WTC11 (cell line): ENCODE measurements at regions of chr17 and their contacts with region 1.

Region 1: DNA sequence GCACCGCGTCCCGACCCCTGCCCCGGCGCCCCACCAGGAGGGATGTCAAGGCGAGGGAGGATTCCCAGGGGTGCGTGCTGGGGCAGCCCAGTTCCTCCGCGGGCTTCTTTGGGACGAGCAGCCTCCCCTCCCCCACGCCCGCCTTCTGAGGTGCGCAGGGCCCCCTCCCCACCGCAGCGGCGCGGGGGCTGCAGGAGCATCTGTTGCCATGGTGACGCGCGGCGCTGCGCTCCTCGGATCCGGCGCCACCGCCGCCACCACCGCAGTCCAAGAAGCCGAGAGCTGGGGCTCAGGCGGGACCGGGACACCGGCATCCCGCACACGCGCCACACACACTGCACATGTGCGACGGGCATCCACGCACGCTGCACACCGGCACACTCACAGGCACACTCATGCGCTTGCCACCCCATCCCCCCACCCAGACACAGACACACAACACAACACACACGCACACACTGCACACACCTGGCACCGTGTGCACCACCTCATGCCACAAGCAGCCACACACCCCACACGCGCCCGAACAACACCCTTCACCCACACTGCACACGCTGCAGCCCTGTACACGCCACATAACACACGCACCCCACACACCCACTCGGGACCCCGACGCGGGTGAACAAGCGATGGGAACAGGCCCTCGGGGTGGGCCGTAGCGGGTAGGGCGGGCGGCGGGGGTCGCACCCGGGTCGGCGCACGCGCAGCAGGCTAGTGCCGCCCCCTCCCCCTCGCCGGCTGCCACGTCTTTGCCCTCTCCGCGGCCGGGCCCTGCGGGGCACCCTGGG is 17.0 kb downstream of the ENPP7 start:
- DNase-seq: peak; percentile 61
- ATAC-seq: peak; percentile 21; the same call in 1 of the 2 replicates
- H3K4me3 Mint-ChIP-seq: peak overlapping the region; percentile 75
- H3K27ac Mint-ChIP-seq: no peak overlapping the region
- H3K4me1 Mint-ChIP-seq: peaks cover 15% of the 10 kb centered on the region
- H3K27me3 Mint-ChIP-seq: peaks cover 81% of the 10 kb centered on the region
- CTCF ChIP-seq: no peak

Region 2: GRCh38 chr17:79721993-79722671 is 25.6 kb before region 1 on chr17:
- CTCF ChIA-PET with region 1: interaction called, 65 read pairs
- POLR2A ChIA-PET with region 1: no interaction called
- DNase-seq: peak; percentile 31
- ATAC-seq: peak; percentile 96
- H3K4me3 Mint-ChIP-seq: no peak overlapping the region
- H3K27ac Mint-ChIP-seq: no peak overlapping the region
- H3K4me1 Mint-ChIP-seq: peaks cover 8% of the 10 kb centered on the region; the same call in 1 of the 2 replicates
- H3K27me3 Mint-ChIP-seq: peaks cover 4% of the 10 kb centered on the region; the same call in 1 of the 2 replicates
- CTCF ChIP-seq: peak; percentile 27; the same call in 1 of the 2 replicates

Region 3: DNA sequence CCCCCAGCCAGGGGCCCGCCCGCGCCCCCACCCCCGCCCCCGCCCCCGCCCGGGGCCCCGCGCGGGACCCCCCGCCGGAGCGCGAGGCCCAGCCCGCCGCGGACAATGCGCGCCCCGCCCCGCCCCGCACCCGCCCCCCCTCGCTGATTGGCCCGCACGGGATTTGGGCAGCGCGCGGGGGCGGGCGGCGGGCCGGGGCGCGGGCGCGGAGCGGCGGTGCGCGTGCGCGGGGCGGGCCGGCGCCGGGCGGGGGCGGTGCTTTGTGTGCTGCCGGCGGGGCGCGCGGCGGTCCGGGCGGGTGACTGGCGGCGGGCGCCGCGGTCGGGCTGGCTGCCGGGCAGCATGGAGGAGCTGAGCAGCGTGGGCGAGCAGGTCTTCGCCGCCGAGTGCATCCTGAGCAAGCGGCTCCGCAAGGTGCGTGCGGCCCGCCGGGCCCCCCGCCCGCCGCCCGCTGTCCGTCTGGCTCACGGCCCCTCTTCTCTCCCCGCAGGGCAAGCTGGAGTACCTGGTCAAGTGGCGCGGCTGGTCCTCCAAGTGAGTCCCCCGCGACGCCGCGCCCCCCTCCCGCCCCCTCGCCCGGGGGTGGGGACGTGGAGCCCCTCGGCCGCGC is 30.3 kb after region 1 on chr17 and contains the start of gene CBX2:
- CTCF ChIA-PET with region 1: interaction called, 83 read pairs
- POLR2A ChIA-PET with region 1: no interaction called
- DNase-seq: peak; percentile 75
- ATAC-seq: peak; percentile 55
- H3K4me3 Mint-ChIP-seq: peak within 1 kb of the TSS; percentile 91
- H3K27ac Mint-ChIP-seq: peak within 1 kb of the TSS; percentile 93
- H3K4me1 Mint-ChIP-seq: peaks cover 54% of the 10 kb centered on the region
- H3K27me3 Mint-ChIP-seq: peaks cover 15% of the 10 kb centered on the region
- CTCF ChIP-seq: no peak
- total RNA-seq, gene CBX2: 78.1 to 85.5 TPM (median 78.7 TPM) in 3 replicates

Region 4: GRCh38 chr17:79796763-79797491 is 49.2 kb after region 1 on chr17 and contains the start of gene CBX8:
- CTCF ChIA-PET with region 1: interaction called, 30 read pairs
- POLR2A ChIA-PET with region 1: interaction called, 9 read pairs
- DNase-seq: peak; percentile 100
- ATAC-seq: peak; percentile 71
- H3K4me3 Mint-ChIP-seq: peak within 1 kb of the TSS; percentile 68
- H3K27ac Mint-ChIP-seq: no peak within 1 kb of the TSS
- H3K4me1 Mint-ChIP-seq: peaks cover 47% of the 10 kb centered on the region
- H3K27me3 Mint-ChIP-seq: peaks cover 94% of the 10 kb centered on the region
- CTCF ChIP-seq: no peak
- total RNA-seq, gene CBX8: 1.8 to 2.1 TPM (median 2.0 TPM) in 3 replicates

Region 5: DNA sequence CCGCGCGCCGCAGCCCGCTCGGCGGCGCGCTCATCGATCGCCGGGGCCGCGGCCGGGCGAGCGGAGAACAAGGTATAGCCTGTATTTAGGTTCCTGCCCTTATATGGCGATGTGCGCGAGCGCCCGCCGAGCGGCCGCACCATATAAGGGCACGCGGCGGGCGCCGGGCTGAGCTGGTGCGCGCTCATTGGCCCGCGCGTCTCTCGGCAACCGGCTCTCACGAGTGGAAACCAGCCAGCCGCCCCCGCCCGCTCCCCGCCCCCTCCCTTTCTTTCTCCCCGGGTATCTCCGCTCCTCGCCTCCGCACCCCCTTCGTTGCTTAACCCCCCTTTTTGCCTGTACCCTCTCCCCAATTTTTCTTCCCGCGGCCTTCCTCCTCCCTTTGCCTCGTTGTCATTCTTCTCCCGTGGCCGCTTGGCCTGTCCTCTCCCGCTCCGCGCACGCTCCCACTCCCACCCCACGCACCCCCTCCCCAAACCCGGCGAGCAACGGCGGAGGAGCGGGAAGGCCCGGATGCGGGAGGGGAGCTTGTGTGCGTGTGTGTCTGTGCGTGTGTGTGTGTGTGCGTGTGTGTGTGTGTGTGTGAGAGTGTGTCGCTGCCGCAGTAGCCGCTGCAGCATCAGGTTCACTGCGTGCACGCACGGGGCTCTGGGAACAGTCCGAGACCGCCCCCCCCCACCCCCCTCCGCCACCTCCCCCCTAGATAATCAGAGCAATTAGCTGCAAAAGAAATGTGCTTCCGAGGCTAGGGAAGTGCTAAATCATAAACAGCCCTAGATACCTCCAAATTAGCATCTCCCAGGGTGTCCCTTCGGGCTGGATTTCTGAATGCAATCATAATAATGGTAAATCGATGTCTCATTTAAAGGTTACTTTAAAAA is 62.7 kb after region 1 on chr17:
- CTCF ChIA-PET with region 1: interaction called, 24 read pairs
- POLR2A ChIA-PET with region 1: interaction called, 3 read pairs
- DNase-seq: peak; percentile 83
- ATAC-seq: peak; percentile 74
- H3K4me3 Mint-ChIP-seq: peak overlapping the region; percentile 59
- H3K27ac Mint-ChIP-seq: no peak overlapping the region
- H3K4me1 Mint-ChIP-seq: peaks cover 40% of the 10 kb centered on the region
- H3K27me3 Mint-ChIP-seq: peaks cover 92% of the 10 kb centered on the region
- CTCF ChIP-seq: no peak